A549 (cell line): ENCODE measurements at regions of chr21 and their contacts with region 1.

Region 1: DNA sequence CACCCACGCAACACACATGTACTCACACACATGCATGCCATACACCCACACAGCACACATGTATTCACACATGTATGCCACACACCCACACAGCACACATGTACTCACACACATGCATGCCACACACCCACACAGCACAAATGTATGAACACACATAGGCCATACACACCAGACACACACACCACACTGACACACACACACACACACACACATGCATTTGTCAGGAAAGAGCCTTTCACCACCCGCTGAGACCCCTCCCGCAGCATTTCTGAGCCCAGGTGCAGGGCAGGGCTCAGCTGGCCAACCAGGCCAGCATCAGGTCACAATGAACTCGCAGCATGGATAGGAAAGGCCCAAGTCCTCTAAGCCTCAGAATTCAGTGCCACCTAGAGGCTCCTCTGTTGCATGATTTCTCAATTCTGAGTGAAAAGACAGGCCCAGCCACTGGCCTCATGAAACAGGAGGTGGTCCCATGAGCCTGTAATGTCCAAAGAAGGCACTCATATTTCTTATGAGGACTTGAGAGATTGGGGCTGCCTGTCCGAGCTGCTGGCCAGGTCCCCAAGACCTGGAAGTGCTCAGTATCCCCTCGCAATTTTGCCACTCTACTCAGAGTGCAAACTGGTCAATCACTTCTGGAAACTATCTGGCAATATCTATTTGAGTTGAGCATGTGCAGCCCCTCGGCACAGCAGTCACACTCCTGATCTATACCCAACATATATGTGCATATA is 57.3 kb downstream of the PSMG1 start:
- DNase-seq: peak in 1 of 2 experiments; percentile 59
- ATAC-seq: peak; percentile 82 to 87
- H3K4me3 ChIP-seq: no peak overlapping the region
- H3K27ac ChIP-seq: peak overlapping the region; percentile 30 to 60; a peak in 3 of 6 replicates
- H3K4me1 ChIP-seq: no peaks in the 10 kb centered on the region
- CTCF ChIP-seq: peak; percentile 45
- EP300 ChIP-seq: no peak
- POLR2A ChIP-seq: no peak
- RAD21 ChIP-seq: peak; percentile 71 to 73

Region 2: DNA sequence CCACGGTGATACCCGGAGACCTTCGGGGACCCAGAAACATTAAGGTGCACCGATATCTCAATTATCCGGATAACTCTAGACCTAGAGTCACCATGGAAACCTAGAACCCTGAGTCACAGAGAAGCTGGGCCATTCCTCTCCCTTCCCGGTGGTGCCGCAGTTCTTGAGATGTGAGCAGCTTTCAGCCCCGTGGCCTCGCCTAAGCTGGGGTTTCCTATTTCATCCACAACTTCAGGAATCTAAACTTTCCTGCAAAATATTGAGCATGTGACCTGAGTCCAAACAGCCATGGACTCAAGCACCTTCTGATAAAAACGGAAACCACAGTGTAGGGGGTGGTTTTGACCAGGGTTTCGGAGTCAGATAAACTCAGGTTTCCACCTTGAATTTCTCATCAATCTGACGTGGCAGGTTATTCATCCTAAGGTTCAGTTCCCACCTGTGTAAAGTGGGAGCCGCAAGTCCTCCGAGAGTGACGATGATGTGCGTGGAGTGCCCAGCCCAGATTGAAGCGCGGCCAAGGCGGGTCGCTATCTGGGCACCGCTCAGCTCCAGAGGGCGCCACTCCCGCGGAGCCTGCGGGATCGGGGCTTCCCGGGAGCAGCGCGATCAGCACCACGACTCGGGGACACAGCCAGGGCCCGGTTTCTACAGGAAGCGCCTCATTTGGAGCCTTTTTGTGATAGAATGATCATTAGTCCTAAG is 321.1 kb before region 1 on chr21:
- CTCF ChIA-PET with region 1: interaction called, 10 read pairs
- POLR2A ChIA-PET with region 1: no interaction called
- DNase-seq: peak in 1 of 2 experiments; percentile 69
- ATAC-seq: peak; percentile 69 to 71
- H3K4me3 ChIP-seq: peak overlapping the region; percentile 93
- H3K27ac ChIP-seq: peak overlapping the region; percentile 98 to 99
- H3K4me1 ChIP-seq: peaks cover 63% of the 10 kb centered on the region
- CTCF ChIP-seq: peak; percentile 51
- EP300 ChIP-seq: no peak
- POLR2A ChIP-seq: no peak
- RAD21 ChIP-seq: peak; percentile 44 to 64; a peak in 4 of 5 replicates

Region 3: DNA sequence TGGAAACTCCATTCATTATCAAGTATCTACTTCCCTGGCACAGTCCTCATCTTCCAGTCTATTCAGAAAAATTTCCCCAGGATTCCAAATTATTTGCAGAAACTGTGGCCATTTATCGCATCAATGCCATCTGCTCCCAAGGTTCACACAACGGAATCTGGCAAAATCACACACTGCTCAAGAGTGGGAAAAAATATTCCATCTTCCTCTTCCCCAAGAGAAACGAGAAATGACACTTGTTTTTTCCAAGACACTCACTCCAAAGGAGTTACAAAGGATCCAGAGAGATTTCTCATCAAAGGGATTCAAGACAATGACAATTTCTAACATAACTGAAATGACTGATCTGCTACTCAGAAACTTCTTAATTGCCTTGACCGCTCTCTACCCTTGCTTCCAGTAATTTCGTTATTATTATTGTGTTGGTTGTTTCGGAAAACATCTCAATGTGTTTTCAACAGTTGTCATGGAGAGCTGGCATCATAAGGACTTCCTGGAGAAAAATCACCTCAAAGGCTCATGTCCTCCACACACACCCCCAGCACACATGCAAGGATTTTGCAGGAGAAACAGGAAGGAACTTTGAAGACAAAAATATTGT is 70.7 kb before region 1 on chr21:
- CTCF ChIA-PET with region 1: no interaction called
- POLR2A ChIA-PET with region 1: no interaction called
- DNase-seq: no peak
- ATAC-seq: no peak
- H3K4me3 ChIP-seq: no peak overlapping the region
- H3K27ac ChIP-seq: no peak overlapping the region
- H3K4me1 ChIP-seq: no peaks in the 10 kb centered on the region
- CTCF ChIP-seq: no peak
- EP300 ChIP-seq: no peak
- POLR2A ChIP-seq: no peak
- RAD21 ChIP-seq: no peak

Region 4: DNA sequence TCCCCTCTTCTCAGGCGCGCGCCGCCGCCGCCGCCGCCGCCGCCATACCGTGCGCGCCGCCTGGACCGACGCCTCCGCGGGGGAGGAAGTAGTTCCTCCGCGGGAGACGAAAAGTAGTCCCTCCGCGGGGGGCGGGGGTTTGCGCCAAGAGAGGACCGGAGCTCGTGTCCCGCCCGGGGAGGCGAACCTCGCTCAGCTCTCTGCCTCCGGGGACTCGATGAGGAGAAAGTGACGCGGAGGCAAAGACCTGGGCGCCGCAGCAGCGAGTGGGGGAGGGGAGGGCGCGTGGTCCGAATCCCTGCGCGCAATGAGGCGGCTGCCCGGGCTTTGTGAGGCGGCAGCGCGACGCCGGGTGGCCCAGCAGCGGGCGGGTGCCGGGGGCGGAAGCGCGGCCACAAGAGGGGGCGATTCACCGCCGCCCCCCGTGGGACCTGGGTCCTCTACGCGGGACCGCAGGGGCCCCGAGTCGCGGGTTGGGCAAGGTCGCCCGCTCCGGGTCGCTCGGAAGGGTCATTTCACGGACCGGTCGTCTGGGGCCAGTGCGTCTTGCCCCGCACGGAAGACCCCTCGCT is 187.7 kb after region 1 on chr21 and contains the start of gene BRWD1:
- CTCF ChIA-PET with region 1: no interaction called
- POLR2A ChIA-PET with region 1: no interaction called
- DNase-seq: peak; percentile 40 to 90
- ATAC-seq: peak; percentile 68 to 74
- H3K4me3 ChIP-seq: peak within 1 kb of the TSS; percentile 86
- H3K27ac ChIP-seq: peak within 1 kb of the TSS; percentile 98 to 99
- H3K4me1 ChIP-seq: peaks cover 17% of the 10 kb centered on the region; the same call in 2 of the 3 replicates
- CTCF ChIP-seq: 0 out of 3 replicates have a peak, but pooled peaks have one; percentile 14
- EP300 ChIP-seq: no peak
- POLR2A ChIP-seq: peak; percentile 60
- RAD21 ChIP-seq: peak in 1 of 2 experiments; percentile 20; a peak in 1 of 5 replicates
- polyA plus RNA-seq, gene BRWD1: 15.0 and 22.2 TPM in 2 replicates